Left lung (tissue), 14 donors: ENCODE measurements at regions of chr1 and their contacts with region 1.

Region 1: DNA sequence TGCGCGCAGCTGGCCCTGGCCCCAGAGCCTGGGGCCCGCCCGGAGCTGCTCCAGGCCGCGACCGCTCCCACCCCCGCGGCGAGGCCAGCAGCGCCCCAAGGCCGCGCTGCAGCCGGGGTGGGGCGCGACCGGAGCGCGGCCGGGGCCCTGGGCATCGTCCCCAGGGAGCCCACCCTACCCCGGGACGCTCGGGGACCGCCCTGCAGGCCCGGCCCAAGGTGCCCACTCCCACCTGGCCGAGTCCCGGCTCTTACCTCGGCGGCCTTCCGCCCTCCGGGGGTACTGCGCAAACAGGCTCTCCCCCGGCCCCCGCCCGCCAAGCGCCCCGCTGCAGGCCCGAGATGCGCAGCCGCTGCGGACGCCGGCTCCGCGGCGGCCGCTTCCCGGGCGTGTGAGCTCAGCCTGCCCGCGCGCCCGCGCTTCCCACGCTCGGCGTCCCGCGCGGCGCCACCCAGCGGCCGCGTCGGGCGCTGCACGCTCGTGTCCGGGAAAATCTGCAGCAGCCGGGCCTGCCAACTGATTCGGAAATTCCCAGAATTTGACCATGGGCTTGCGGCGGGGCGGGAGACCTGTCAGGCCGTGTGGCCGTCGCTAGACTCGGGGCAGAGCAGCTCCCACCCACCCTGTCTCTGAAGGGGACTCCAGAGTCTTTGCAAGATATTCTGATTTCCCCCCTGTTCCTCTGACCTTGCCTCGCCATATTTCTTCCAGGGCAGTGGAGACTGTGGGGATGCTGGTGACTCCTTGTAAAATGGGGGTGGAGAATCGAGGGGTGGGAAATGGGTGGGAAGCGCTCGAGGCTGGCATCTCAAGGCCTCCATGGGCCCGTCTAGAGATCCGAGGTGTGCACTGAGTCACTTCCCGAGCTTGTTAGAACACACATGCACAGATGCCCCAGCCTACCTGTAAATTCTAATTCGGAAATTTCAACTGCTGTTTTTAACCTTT is 41.9 kb downstream of the CD34 start:
- DNase-seq: peak; percentile 72 to 94 (median 87)
- ATAC-seq: peak; percentile 82
- H3K4me3 ChIP-seq: peak overlapping the region; percentile 62 to 89
- H3K27ac ChIP-seq: peak overlapping the region; percentile 87 to 89
- H3K4me1 ChIP-seq: peaks cover 16 to 82% of the 10 kb centered on the region in 2 donors
- H3K27me3 ChIP-seq: no peaks in the 10 kb centered on the region
- CTCF ChIP-seq: peak; percentile 75 to 82

Region 2: DNA sequence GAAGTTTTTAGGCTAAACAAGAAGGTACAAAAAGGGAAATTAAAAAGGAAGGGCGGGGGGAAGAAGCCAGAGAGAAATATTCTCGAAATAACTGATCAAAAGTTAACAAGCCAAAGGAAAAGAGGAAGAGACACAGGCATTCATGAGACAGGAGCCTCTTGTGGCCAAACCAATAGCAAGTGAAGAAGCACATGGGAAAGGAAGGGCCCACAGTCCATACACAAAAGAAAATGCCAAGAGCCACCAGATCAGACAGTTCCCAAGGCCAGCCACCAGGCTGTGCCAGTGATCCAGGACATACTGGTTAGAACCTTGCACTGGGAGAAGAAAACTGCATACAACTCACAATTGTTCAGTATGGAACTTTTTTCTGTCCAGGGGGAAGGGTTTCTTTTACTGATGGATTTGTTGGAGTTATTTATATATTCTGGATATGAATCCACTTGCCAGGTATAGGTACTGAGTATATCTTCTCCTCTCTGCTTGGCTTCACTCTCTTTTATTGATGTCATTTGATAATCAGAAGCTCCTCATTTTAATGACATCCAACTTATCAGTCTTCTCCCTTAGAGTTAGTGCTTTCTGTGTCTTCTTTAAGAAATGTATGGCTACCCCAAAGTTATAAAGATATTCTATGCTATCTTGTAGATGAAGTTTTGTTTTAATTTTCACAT is 40.4 kb before region 1 on chr1:
- intact Hi-C with region 1: loop called in 1 of 2 experiments (anchors 2 kb)
- DNase-seq: peak in 3 of 4 donors; percentile 73 to 83 (median 75)
- ATAC-seq: peak; percentile 61
- H3K4me3 ChIP-seq: no peak overlapping the region
- H3K27ac ChIP-seq: peak overlapping the region; percentile 95 to 98
- H3K4me1 ChIP-seq: peaks cover 41 to 91% of the 10 kb centered on the region in 2 donors
- H3K27me3 ChIP-seq: no peaks in the 10 kb centered on the region
- CTCF ChIP-seq: peak; percentile 66 to 89